IMR-90 (cell line): ENCODE measurements at regions of chr14 and their contacts with region 1.

Region 1: GRCh38 chr14:95157327-95158189 is at the start of gene DICER1:
- DNase-seq: peak; percentile 89
- ATAC-seq: peak; percentile 95
- H3K4me3 ChIP-seq: peak within 1 kb of the TSS; percentile 91
- H3K27ac ChIP-seq: peak within 1 kb of the TSS; percentile 99
- H3K4me1 ChIP-seq: peaks cover 2% of the 10 kb centered on the region; the same call in 1 of the 2 replicates
- H3K27me3 ChIP-seq: no peaks in the 10 kb centered on the region
- CTCF ChIP-seq: no peak
- POLR2A ChIP-seq: peak; percentile 50; the same call in 1 of the 2 replicates
- RAD21 ChIP-seq: no peak
- total RNA-seq, gene DICER1: 41.7 and 49.5 TPM in 2 replicates

Region 2: DNA sequence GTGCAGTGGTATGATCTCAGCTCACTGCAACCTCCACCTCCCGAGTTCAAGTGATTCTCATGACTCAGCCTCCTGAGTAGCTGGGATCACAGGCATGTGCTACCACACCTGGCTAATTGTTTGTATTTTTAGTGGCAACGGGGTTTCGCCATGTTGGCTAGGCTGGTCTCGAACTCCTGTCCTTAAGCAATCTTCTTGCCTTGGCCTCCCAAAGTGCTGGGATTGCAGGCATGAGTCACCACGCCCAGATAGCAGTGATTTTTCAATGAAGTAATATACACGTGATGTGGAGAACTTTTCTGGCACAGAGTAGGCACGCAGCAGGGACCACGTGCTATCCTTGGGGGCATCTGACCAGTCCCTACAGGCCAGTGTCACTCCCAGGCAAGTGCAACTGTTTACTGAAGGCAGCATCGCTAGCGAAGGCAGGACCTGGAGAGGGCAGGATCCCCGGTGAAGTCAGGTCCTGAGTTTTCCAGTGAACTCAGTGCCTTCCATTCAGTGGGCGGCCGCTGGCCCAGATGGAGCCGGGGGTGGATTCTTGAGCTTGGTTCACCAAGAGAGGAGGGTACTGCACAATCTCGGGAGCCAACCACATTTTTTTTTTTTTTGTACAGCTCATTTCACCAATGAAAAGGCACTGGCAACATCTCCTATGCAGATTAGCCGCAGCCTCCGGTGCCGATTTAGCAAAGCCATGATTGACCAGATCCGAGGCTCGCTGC is 173.2 kb after region 1 on chr14:
- CTCF ChIA-PET with region 1: no interaction called
- POLR2A ChIA-PET with region 1: no interaction called
- dilution Hi-C with region 1: no loop called
- in situ Hi-C with region 1: no loop called
- intact Hi-C with region 1: loop called (anchors 1 kb)
- DNase-seq: no peak
- ATAC-seq: no peak
- H3K4me3 ChIP-seq: no peak overlapping the region
- H3K27ac ChIP-seq: no peak overlapping the region
- H3K4me1 ChIP-seq: no peaks in the 10 kb centered on the region
- H3K27me3 ChIP-seq: peaks cover 2% of the 10 kb centered on the region; the same call in 1 of the 2 replicates
- CTCF ChIP-seq: no peak
- POLR2A ChIP-seq: no peak
- RAD21 ChIP-seq: no peak